ENCODE measurements at regions of chr17 and their contacts with region 1.

Region 1: GRCh38 chr17:42019509-42020404 is at the start of gene NKIRAS2:
- DNase-seq: peak; percentile 86 to 96 (median 90)
- ATAC-seq: peak; percentile 72
- H3K4me3 Mint-ChIP-seq: peak within 1 kb of the TSS; percentile 83 to 100 (median 100)
- H3K27ac Mint-ChIP-seq: peak within 1 kb of the TSS; percentile 66 to 100 (median 92)
- H3K4me1 Mint-ChIP-seq: peaks cover 29 to 73% (median 67%) of the 10 kb centered on the region in 4 donors
- H3K27me3 Mint-ChIP-seq: no peaks in the 10 kb centered on the region
- polyA plus RNA-seq, gene NKIRAS2: 20.5 to 30.2 (median 21.9) TPM

Region 2: GRCh38 chr17:41918314-41919164 is 101.2 kb before region 1 on chr17 and contains the start of gene ACLY:
- POLR2A ChIA-PET with region 1: interaction called, 10 read pairs
- DNase-seq: peak; percentile 89 to 96 (median 93)
- ATAC-seq: peak; percentile 97 to 99
- H3K4me3 Mint-ChIP-seq: peak within 1 kb of the TSS; percentile 85 to 95 (median 90)
- H3K27ac Mint-ChIP-seq: peak within 1 kb of the TSS in 9 of 10 donors; percentile 61 to 95 (median 89)
- H3K4me1 Mint-ChIP-seq: peaks cover 16 to 44% (median 34%) of the 10 kb centered on the region in 4 donors
- H3K27me3 Mint-ChIP-seq: no peaks in the 10 kb centered on the region
- polyA plus RNA-seq, gene ACLY: 42.7 to 61.3 (median 50.1) TPM

Region 3: DNA sequence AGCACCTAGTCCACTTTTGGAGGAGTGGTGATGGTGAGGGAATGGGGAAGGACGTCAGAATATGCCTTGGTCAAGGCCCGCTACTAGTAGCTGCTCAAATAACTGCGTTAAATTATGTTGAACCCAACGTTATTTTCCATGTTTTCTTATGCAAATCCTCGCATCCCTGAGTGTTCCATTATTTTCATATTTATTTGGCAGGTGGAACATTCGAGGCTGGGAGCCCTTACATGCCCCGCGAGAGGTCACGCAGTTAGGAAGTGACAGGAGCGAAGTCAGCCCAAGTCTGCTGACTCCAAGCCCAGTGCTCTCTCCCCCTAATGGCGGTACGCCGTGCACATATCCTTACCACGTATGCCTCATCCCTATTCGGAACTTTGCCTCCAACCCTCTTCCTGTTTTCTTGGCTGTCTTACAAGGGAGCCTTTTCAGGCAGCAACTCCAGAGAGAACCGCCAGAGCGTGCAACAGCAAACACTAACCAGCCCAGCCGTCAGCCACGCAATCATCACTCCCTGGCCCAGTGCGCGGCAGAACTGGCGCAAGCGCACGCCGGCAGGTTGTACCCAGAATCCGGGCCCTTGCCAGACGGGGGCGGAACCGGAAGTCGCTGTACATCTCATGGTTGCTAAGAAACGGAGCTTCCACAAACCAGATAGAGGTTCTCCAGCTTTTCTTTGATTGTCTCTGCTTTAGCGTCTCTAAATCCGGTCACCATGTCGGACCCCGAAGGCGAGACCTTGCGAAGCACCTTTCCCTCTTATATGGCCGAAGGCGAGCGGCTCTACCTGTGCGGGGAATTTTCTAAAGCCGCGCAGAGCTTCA is 89.5 kb before region 1 on chr17 and contains the start of gene ODAD4:
- POLR2A ChIA-PET with region 1: interaction called, 11 read pairs
- DNase-seq: peak; percentile 92 to 97 (median 96)
- ATAC-seq: peak; percentile 97 to 98
- H3K4me3 Mint-ChIP-seq: peak within 1 kb of the TSS; percentile 91 to 98 (median 96)
- H3K27ac Mint-ChIP-seq: peak within 1 kb of the TSS; percentile 95 to 99 (median 98)
- H3K4me1 Mint-ChIP-seq: peaks cover 14 to 28% (median 26%) of the 10 kb centered on the region in 4 donors
- H3K27me3 Mint-ChIP-seq: no peaks in the 10 kb centered on the region
- polyA plus RNA-seq, gene ODAD4: 0.08 to 0.09 TPM in 2 of 3 donors, not detected in the other

Region 4: DNA sequence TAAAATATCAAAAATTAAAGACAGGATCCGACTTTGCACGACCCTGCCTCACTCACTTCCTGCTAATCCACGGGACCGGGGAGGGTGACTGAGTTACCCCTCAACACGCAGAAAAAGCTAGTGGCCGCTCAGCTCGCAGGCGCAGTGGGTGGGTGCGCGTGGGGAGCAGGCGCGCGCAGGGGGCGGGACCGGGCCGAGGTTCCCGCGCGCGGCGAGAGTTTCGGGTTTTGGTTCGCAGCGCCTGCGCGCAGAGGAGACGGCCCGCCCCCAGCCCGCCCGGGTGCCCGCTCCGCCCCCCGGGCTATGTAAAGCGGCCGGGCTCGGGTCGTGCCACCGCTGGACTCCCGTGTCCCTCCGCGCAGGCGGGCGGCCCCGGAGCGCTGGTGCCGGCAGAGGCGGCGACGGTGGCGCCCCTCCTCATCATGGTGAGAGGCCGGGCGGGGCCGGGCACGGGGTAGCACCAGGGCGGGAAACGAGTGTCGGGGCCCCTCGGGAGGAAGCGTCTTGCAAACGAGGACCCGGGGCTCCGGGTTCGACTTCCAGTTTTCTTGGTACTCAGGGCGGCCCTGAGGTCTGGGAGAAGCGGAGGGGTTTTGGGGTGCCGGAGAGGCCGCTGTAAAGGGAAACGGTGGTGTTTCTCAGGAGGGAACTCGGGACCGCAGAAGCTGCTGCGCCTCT is 53.2 kb before region 1 on chr17 and contains the start of gene CNP:
- POLR2A ChIA-PET with region 1: interaction called, 56 read pairs
- DNase-seq: peak; percentile 82 to 96 (median 90)
- ATAC-seq: peak; percentile 82
- H3K4me3 Mint-ChIP-seq: peak within 1 kb of the TSS; percentile 80 to 94 (median 88)
- H3K27ac Mint-ChIP-seq: peak within 1 kb of the TSS; percentile 82 to 97 (median 93)
- H3K4me1 Mint-ChIP-seq: peaks cover 14 to 51% (median 49%) of the 10 kb centered on the region in 4 donors
- H3K27me3 Mint-ChIP-seq: no peaks in the 10 kb centered on the region
- polyA plus RNA-seq, gene CNP: 27.0 to 33.6 (median 27.5) TPM

Region 5: DNA sequence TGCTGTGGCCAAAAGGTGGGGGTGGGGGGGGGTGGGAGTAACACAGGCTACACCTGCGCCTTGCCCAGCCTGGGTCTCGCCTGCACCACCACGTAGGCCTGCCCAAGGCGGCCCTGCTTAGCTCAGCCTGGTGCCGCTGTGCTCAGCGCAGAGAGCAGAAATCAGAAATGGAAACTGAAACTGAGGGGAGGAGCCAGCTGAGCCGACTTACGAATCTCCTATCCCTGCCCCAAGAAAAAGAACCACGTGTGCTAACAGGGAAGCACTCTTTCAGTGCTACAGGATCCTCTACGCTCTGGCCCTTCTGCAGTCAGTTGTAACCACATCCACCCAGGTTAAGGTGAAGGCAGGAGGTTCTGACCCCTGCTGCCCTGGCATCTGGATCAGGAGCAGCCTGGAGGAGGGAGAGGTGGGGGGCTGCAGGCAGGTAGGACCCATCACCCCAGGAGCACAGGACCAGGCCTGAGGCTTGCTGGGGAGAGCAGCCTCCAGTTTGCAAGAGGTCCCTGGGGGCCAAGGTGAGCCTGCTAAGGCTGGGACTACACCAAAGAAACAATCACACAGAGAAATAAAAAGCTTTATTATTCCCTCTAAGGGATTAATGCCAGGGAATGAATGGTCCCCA is 92.9 kb after region 1 on chr17 and contains the start of gene DHX58:
- POLR2A ChIA-PET with region 1: interaction called, 83 read pairs
- DNase-seq: peak; percentile 56 to 87 (median 76)
- ATAC-seq: peak; percentile 88
- H3K4me3 Mint-ChIP-seq: peak within 1 kb of the TSS; percentile 86 to 98 (median 93)
- H3K27ac Mint-ChIP-seq: peak within 1 kb of the TSS; percentile 93 to 100 (median 97)
- H3K4me1 Mint-ChIP-seq: peaks cover 22 to 67% (median 60%) of the 10 kb centered on the region in 4 donors
- H3K27me3 Mint-ChIP-seq: no peaks in the 10 kb centered on the region
- polyA plus RNA-seq, gene DHX58: 7.3 to 21.7 (median 13.6) TPM

Region 6: GRCh38 chr17:42120770-42121769 is 101.3 kb after region 1 on chr17 and contains the start of gene KAT2A:
- POLR2A ChIA-PET with region 1: interaction called, 14 read pairs
- DNase-seq: peak; percentile 56 to 83 (median 72)
- ATAC-seq: peak; percentile 91 to 95
- H3K4me3 Mint-ChIP-seq: peak within 1 kb of the TSS; percentile 68 to 85 (median 76)
- H3K27ac Mint-ChIP-seq: peak within 1 kb of the TSS; percentile 4 to 85 (median 72)
- H3K4me1 Mint-ChIP-seq: peaks cover 12 to 34% (median 28%) of the 10 kb centered on the region in 4 donors
- H3K27me3 Mint-ChIP-seq: no peaks in the 10 kb centered on the region
- polyA plus RNA-seq, gene KAT2A: 5.1 to 11.8 (median 8.8) TPM

Region 7: DNA sequence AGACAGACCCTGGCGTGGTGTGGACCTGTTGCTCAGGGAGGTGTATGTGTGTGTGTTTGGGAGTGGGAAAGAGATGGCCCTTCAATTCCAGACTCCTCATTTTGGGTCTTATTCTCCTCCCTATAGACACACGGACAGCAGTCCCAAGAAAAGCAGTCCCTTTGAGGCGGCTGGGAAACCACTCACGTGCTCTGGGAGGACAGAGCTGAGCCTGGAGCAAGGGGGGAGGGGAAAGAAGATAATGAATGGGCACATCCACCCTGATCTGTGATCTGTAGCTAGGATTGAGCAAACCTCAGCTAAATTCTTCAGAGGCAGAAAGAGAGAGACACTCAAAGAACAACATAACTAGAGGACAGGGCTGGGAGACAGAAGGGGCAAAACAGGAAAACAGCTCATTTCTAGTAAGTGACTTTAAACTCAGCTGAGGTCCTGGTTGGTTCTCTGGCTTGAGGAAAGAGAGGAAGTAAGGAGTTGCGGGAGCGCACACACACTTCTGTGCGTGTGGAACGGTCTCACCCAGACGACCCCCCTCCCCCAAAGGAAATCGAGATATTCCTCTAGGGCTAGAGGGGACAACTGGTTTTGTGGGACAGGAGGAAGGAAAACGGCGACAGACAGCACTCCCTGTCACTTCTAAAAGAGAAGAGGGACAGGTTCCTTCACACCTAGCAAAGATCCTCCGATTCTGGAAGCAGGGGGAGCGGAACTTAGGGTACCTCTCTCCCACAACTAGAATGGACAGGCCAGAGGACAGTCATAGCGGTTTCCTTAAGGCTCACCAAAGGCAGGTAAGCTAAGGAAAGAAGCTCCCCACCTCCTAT is 134.4 kb after region 1 on chr17:
- POLR2A ChIA-PET with region 1: interaction called, 11 read pairs
- DNase-seq: peak in 2 of 10 donors; percentile 9 to 11
- ATAC-seq: no peak
- H3K4me3 Mint-ChIP-seq: peak overlapping the region; percentile 85 to 98 (median 92)
- H3K27ac Mint-ChIP-seq: peak overlapping the region; percentile 83 to 98 (median 94)
- H3K4me1 Mint-ChIP-seq: peaks cover 20 to 51% (median 43%) of the 10 kb centered on the region in 4 donors
- H3K27me3 Mint-ChIP-seq: peaks cover 0 to 1% (median 0%) of the 10 kb centered on the region in 5 donors

Measured in naive thymus-derived CD8-positive, alpha-beta T cell (primary cell).